Motor neuron (in vitro differentiated cells): ENCODE measurements at regions of chr18 and their contacts with region 1.

Region 1: DNA sequence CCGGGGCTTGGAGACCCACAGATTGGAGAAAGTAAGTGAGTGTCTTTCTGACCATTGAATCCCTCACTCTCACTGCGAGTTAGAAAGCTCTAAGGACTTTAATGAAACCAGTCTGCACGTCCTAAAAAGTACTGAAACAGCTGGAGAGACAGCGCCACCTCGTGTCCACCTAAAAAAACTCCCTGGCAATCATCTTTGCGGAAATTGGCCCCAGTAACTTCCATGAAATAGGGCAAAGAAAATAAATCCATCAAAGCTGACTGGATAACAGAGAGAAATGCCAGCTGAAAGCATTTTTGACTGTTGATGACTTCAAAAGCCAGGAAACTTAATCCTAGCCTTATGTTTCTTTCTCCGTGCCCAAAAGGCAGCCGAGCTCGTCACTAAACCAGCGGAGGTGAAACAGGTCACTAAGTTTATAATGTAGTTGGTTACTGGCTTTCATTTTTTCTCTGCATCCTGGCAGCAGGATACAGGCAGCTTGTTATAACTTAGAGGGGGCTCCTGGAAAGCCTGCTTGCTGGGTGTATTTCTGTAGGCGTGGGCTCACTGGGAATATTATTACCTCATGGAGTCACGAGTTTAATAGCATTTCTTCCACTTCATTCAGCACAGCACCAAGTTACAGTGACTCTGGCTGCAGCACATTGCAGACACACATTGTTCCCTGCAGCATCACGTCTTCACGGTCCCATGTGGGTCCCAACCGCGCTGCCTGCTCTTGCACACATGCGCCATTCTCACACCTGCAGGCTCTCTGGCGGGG is 266.5 kb downstream of the HRH4 start:
- ATAC-seq: peak; percentile 39 to 84 (median 74)
- H3K4me3 ChIP-seq: no peak overlapping the region
- H3K27ac ChIP-seq: no peak overlapping the region
- H3K4me1 ChIP-seq: peaks cover 8 to 14% of the 10 kb centered on the region in 2 donors

Region 2: GRCh38 chr18:24368749-24369148 is 358.2 kb before region 1 on chr18:
- in situ Hi-C with region 1: loop called in 2 of 9 experiments (anchors 10 to 25 kb)
- ATAC-seq: no peak
- H3K4me3 ChIP-seq: no peak overlapping the region
- H3K27ac ChIP-seq: no peak overlapping the region
- H3K4me1 ChIP-seq: no peaks in the 10 kb centered on the region

Region 3: DNA sequence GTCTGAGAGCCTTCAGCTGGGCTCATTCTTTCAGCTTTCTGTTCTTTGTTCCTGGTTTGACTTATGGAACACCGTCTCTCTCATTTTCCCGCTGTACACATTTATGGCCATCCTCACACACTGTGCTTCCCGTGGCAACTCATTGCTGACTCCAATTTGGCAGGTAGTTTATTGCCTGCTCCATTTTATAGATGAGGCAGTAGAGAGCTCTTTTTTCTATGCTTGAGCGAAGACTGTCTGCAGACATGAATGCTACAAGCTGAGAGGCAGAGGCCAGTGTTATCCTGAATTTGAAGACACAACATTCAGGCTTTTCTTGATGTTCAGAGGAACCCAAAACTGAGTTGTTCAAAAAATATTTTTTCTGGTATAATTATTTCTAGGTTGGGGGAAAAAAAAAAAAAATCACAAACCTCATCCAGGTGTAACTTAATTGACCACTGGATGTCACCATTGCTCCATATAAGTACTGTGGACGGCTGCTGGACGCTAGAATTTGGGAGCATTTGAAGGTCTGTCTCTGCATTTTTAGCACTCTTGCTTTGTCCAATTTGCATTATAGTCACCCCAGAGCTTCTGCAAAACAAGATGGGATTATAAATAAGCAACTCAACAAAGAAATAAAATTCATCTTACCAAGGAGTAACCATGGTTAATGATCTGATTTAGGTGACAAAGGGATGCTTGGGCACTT is 183.0 kb before region 1 on chr18:
- in situ Hi-C with region 1: loop called in 1 of 9 experiments (anchors 25 kb)
- ATAC-seq: peak; percentile 44 to 60 (median 52)
- H3K4me3 ChIP-seq: no peak overlapping the region
- H3K27ac ChIP-seq: no peak overlapping the region
- H3K4me1 ChIP-seq: peaks cover 2 to 32% of the 10 kb centered on the region in 2 donors

Region 4: GRCh38 chr18:24600076-24600654 is 126.7 kb before region 1 on chr18:
- in situ Hi-C with region 1: loop called in 5 of 9 experiments (anchors 10 to 25 kb)
- ATAC-seq: peak in 4 of 8 experiments; percentile 28 to 63 (median 50)
- H3K4me3 ChIP-seq: no peak overlapping the region
- H3K27ac ChIP-seq: no peak overlapping the region
- H3K4me1 ChIP-seq: peaks cover 2 to 30% of the 10 kb centered on the region in 2 donors